Posterior vena cava (tissue), 2 donors: ENCODE measurements at regions of chr1 and their contacts with region 1.

Region 1: GRCh38 chr1:181676269-181676668 is 193.0 kb downstream of the CACNA1E start:
- DNase-seq: no peak

Region 2: DNA sequence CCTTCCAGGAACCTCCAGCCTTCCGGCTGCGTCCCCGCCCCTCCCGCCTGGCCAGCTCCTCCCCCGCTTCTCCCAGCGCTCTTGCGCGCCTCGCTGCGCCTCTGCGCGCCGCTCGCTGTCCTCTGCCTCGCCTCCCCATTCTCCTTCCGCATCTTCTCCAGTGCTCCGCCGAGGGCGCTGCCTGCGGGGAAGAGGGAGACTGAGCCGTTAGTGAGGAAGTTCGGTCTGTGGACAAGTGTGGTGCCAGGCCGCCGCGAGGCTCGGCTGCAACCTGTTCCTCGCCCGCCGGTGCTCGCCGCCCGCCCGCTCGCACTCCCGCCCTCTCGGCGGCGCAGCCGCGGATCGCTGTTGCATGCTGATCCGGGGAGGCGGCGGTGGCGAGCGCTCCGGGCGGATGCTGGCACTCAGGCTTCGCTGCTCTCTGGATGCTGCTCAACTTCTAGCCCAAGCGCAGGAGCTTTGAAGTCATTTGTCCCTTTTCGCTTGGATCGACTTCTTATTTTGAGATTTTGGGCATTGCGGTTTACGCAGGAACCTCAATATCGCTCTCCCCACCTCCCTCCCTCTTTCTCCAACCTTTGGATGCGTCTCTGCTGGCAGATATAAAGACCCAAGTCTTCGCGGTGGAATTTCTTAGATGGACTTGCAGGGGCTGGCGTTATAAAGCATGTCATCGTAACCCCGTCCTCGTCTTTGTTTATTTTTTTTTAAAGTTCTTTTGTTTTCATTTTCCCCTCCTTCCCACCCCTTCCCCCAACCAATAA is 193.6 kb before region 1 on chr1:
- intact Hi-C with region 1: loop called in 1 of 2 experiments (anchors 10 kb)
- DNase-seq: peak; percentile 84

Region 3: GRCh38 chr1:181630838-181631237 is 45.4 kb before region 1 on chr1:
- intact Hi-C with region 1: loop called in 1 of 2 experiments (anchors 1 kb)
- DNase-seq: no peak

Region 4: GRCh38 chr1:181704546-181704945 is 28.3 kb after region 1 on chr1:
- intact Hi-C with region 1: no loop called
- DNase-seq: no peak